B cell (primary cell): ENCODE measurements at regions of chr7 and their contacts with region 1.

Region 1: GRCh38 chr7:87312215-87312865 is 33.1 kb upstream of the CROT start:
- DNase-seq: peak; percentile 70
- ATAC-seq: peak; percentile 97
- H3K4me3 ChIP-seq: no peak overlapping the region
- H3K4me3 Mint-ChIP-seq: no peak overlapping the region
- H3K27ac ChIP-seq: no peak overlapping the region
- H3K27ac Mint-ChIP-seq: no peak overlapping the region
- H3K4me1 ChIP-seq: no peaks in the 10 kb centered on the region
- H3K4me1 Mint-ChIP-seq: no peaks in the 10 kb centered on the region
- H3K27me3 ChIP-seq: no peaks in the 10 kb centered on the region
- H3K27me3 Mint-ChIP-seq: no peaks in the 10 kb centered on the region
- CTCF ChIP-seq: peak; percentile 99

Region 2: GRCh38 chr7:88169717-88170320 is 857.5 kb after region 1 on chr7:
- CTCF ChIA-PET with region 1: no interaction called
- POLR2A ChIA-PET with region 1: no interaction called
- intact Hi-C with region 1: loop called (anchors 2 kb)
- DNase-seq: peak; percentile 6
- ATAC-seq: no peak
- H3K4me3 ChIP-seq: no peak overlapping the region
- H3K4me3 Mint-ChIP-seq: no peak overlapping the region
- H3K27ac ChIP-seq: no peak overlapping the region
- H3K27ac Mint-ChIP-seq: no peak overlapping the region
- H3K4me1 ChIP-seq: no peaks in the 10 kb centered on the region
- H3K4me1 Mint-ChIP-seq: no peaks in the 10 kb centered on the region
- H3K27me3 ChIP-seq: no peaks in the 10 kb centered on the region
- H3K27me3 Mint-ChIP-seq: no peaks in the 10 kb centered on the region
- CTCF ChIP-seq: peak; percentile 68